Ascending aorta (tissue), 2 donors: ENCODE measurements at regions of chr2 and their contacts with region 1.

Region 1: GRCh38 chr2:44167940-44168680 is 565 bp upstream of the PPM1B start:
- DNase-seq: peak; percentile 99 to 100
- H3K4me3 ChIP-seq: peak overlapping the region; percentile 57 to 76
- H3K27ac ChIP-seq: peak overlapping the region; percentile 95 to 98
- H3K4me1 ChIP-seq: peaks cover 0 to 16% of the 10 kb centered on the region in 2 donors
- H3K27me3 ChIP-seq: no peaks in the 10 kb centered on the region
- CTCF ChIP-seq: no peak

Region 2: DNA sequence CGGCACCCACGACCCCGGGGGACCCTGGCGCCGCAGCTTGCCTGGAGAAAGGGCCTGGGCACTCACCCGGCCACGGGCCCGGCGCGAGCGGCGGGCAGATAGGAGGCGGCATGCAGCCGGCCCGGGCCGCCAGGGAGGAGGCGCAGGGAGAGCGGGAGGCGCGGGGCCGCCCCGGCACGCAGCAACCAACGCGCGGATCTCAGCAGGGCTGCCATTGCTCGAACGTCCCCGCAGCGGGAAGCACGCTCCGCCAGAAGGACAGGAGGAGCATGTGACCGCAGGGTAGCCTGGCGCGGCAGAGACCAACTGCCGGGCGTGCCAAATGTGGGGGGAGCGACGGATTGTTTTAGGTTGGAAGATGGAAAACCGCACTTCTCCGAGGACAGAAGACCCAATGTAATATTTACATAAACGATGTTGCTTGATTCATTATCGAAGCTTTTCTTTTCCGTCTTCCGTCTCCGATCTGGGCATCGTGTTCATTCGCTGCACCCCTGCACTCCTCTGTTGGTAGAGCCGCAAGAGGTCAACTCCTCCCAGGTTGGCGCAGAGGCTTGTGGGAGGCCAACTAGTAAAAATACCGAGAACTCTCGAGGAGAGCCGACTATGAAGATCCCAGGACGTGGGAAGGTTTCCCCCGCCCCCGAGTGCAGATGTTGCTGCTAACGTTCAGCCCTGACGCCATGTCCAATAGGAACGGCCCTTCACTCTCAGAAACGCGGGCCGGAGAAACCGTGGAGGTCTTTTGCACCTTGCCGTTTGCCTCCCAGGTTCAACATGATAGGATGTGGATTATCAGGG is 172.2 kb before region 1 on chr2 and contains the start of gene LRPPRC:
- intact Hi-C with region 1: loop called (anchors 2 kb)
- DNase-seq: peak; percentile 72 to 96
- H3K4me3 ChIP-seq: peak within 1 kb of the TSS; percentile 90 to 99
- H3K27ac ChIP-seq: peak within 1 kb of the TSS; percentile 40 to 80
- H3K4me1 ChIP-seq: peaks cover 8 to 18% of the 10 kb centered on the region in 2 donors
- H3K27me3 ChIP-seq: no peaks in the 10 kb centered on the region
- CTCF ChIP-seq: no peak
- total RNA-seq, gene LRPPRC: 78.1 TPM

Region 3: GRCh38 chr2:44087036-44087713 is 80.9 kb before region 1 on chr2:
- intact Hi-C with region 1: loop called (anchors 1 kb)
- DNase-seq: peak; percentile 49 to 92
- H3K4me3 ChIP-seq: peak overlapping the region; percentile 18 to 60
- H3K27ac ChIP-seq: peak overlapping the region; percentile 66 to 70
- H3K4me1 ChIP-seq: peaks cover 0 to 11% of the 10 kb centered on the region in 2 donors
- H3K27me3 ChIP-seq: no peaks in the 10 kb centered on the region
- CTCF ChIP-seq: peak; percentile 90 to 97 (median 96)

Region 4: GRCh38 chr2:44136186-44136585 is 31.9 kb before region 1 on chr2:
- intact Hi-C with region 1: loop called (anchors 2 kb)
- DNase-seq: no peak
- H3K4me3 ChIP-seq: no peak overlapping the region
- H3K27ac ChIP-seq: peak overlapping the region; percentile 51 to 66
- H3K4me1 ChIP-seq: peaks cover 0 to 3% of the 10 kb centered on the region in 2 donors
- H3K27me3 ChIP-seq: no peaks in the 10 kb centered on the region
- CTCF ChIP-seq: no peak

Region 5: DNA sequence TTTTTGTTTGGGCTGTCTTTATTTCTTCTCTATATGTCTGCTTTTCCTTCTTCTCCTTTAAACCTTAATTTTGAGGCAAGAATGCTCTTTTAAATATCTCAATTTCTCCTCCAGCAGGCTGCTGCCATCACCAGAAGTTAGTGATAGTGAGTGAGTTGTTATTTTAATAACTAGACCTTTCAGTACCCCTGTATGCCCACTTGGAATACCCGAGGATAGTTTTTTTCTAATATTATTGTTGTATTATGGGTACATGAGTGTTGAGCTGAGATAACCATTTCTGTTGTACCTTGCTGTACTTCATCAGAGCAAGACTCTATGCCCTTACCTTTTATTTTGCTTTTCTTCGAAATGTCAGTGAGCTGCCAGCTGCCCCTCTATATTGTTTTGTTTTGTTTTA is 50.7 kb after region 1 on chr2:
- intact Hi-C with region 1: no loop called
- DNase-seq: no peak
- H3K4me3 ChIP-seq: no peak overlapping the region
- H3K27ac ChIP-seq: no peak overlapping the region
- H3K4me1 ChIP-seq: no peaks in the 10 kb centered on the region
- H3K27me3 ChIP-seq: no peaks in the 10 kb centered on the region
- CTCF ChIP-seq: no peak

Region 6: GRCh38 chr2:44267796-44268648 is 99.9 kb after region 1 on chr2:
- intact Hi-C with region 1: loop called (anchors 2 kb)
- DNase-seq: peak; percentile 14 to 88
- H3K4me3 ChIP-seq: no peak overlapping the region
- H3K27ac ChIP-seq: peak overlapping the region; percentile 81 to 92
- H3K4me1 ChIP-seq: peaks cover 9 to 42% of the 10 kb centered on the region in 2 donors
- H3K27me3 ChIP-seq: no peaks in the 10 kb centered on the region
- CTCF ChIP-seq: no peak

Region 7: GRCh38 chr2:44291281-44292248 is 123.5 kb after region 1 on chr2:
- intact Hi-C with region 1: loop called (anchors 10 kb)
- DNase-seq: peak in 1 of 2 donors; percentile 78
- H3K4me3 ChIP-seq: peak overlapping the region in 1 of 2 donors; percentile 16
- H3K27ac ChIP-seq: peak overlapping the region; percentile 19 to 61
- H3K4me1 ChIP-seq: peaks cover 0 to 34% of the 10 kb centered on the region in 2 donors
- H3K27me3 ChIP-seq: no peaks in the 10 kb centered on the region
- CTCF ChIP-seq: peak; percentile 46 to 70 (median 50)

Region 8: DNA sequence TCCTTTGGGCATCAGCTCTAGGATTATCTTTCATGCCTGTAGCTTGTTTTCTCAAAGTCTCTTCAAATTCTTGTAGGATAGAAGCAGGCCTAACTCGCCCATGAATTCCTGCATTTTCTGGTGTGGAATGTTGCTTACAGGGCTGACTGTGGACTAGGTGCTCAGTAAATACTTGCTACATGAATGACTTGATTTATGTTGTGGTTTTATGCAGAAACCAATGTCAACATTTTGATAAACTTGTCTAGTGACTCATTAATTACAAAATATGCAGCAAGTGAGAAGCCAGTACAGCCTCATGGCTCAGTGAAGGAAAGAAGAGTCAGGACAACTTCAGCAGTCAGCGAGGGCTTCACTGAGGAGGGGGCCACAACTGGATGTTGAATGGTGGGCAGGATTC is 951.7 kb after region 1 on chr2:
- intact Hi-C with region 1: no loop called
- DNase-seq: no peak
- H3K4me3 ChIP-seq: no peak overlapping the region
- H3K27ac ChIP-seq: peak overlapping the region in 1 of 2 donors; percentile 72
- H3K4me1 ChIP-seq: peaks cover 0 to 4% of the 10 kb centered on the region in 2 donors
- H3K27me3 ChIP-seq: no peaks in the 10 kb centered on the region
- CTCF ChIP-seq: no peak